ENCODE measurements at regions of chr2 and their contacts with region 1.

Region 1: DNA sequence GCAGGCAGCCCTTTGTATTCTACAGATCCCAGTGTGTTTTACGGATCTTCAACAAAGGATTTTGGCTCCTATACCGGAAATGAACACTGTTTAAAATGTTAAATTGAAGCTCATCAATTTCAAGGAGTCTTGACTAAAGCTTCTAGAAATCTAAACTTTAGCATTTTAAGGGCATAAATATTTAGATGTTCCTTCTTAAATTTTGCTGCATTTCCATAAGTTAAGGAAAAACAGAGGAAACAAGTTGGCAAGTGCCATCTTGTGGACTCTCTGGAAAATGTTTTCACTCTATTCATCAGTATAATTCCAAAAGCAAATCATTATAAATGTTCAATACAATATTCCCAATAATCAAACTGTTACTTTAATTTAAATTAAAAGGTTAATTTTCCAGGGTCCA is 19.6 kb downstream of the CHN1 start:
- DNase-seq: peak; percentile 65
- H3K4me3 ChIP-seq: no peak overlapping the region
- H3K27ac ChIP-seq: no peak overlapping the region
- H3K4me1 ChIP-seq: peaks cover 21% of the 10 kb centered on the region; the same call in 1 of the 2 replicates
- H3K27me3 ChIP-seq: no peaks in the 10 kb centered on the region

Region 2: DNA sequence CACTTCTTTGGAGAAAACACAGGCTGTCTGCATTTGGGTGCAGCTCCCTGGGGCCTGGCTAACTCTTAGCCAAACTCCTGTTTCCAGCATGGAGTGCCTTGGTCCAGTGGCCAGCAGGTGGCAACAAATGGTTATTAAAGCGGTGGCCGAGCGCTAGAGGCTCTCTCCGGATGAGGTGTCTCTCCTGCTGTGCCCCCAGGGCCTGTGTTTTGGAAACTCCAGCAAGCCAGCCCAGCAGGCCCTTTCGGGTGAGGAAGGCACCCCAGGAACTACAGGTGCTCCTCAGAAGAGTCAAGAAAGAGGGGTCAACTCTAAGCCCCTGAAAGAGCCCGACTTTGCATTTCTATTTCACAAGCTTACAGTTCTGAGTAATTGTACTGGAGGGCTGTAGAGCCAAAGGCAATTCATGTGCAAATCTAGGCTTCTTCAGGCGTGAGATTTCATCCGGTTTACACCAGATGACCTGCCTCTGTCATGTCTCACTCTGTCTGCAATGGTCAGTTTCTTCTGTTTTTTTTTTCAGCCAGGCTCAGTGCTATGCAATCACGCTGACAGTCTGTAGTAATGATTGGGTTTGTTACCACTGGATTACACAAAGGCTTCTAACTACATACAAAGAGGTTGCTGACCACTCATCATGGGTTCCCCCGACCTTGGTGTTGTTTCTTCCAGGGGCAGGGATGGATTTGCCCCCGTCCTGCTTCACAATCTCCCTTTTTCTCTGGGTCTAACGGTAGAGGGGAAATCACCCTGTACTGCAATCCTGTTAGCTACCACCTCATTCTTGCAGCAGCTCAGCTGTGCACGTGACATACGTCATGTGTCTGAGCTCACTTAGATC is 213.8 kb before region 1 on chr2:
- in situ Hi-C with region 1: loop called (anchors 5 kb)
- DNase-seq: peak; percentile 95
- H3K4me3 ChIP-seq: no peak overlapping the region
- H3K27ac ChIP-seq: peak overlapping the region; percentile 61
- H3K4me1 ChIP-seq: peaks cover 18% of the 10 kb centered on the region
- H3K27me3 ChIP-seq: no peaks in the 10 kb centered on the region

Measured in GM23248 (cell line).